Motor neuron (in vitro differentiated cells): ENCODE measurements at regions of chr2 and their contacts with region 1.

Region 1: DNA sequence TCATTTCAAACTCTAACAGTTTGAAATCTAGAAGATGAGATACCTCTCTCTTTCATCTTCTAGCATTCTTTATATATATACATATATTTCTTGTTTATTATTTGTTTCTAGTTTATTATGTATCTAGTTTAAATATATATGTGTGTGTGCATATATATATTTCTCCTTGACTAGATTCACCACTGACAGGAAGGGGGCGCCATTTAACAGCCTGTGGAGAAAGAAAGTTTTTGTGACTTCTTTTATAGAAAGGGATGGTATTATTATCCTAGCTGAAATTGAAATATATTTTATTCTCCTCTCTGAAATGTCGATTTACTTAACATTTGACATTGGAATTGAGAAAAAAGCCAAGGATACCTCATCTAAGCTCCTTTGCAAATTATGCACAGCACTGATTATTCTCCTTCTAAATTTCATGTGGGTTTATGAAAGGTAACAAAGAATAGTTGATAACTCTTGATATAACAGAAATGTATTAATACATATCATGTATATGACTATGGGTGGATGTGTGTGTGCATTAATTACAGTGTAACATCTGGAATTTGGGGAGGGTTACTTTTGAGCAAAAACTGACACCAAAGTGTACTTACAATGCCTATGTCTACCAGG is 160.7 kb upstream of the NT5C1B start:
- ATAC-seq: peak in 3 of 8 experiments; percentile 26 to 54 (median 49)
- H3K4me3 ChIP-seq: no peak overlapping the region
- H3K27ac ChIP-seq: no peak overlapping the region
- H3K4me1 ChIP-seq: no peaks in the 10 kb centered on the region

Region 2: GRCh38 chr2:18546567-18546966 is 203.5 kb before region 1 on chr2:
- in situ Hi-C with region 1: loop called in 1 of 9 experiments (anchors 25 kb)
- ATAC-seq: peak in 1 of 8 experiments; percentile 76
- H3K4me3 ChIP-seq: no peak overlapping the region
- H3K27ac ChIP-seq: no peak overlapping the region
- H3K4me1 ChIP-seq: no peaks in the 10 kb centered on the region

Region 3: GRCh38 chr2:18626256-18626668 is 123.8 kb before region 1 on chr2:
- in situ Hi-C with region 1: no loop called
- ATAC-seq: no peak
- H3K4me3 ChIP-seq: no peak overlapping the region
- H3K27ac ChIP-seq: no peak overlapping the region
- H3K4me1 ChIP-seq: no peaks in the 10 kb centered on the region

Region 4: GRCh38 chr2:19046986-19047780 is 297.2 kb after region 1 on chr2:
- in situ Hi-C with region 1: loop called in 1 of 9 experiments (anchors 25 kb)
- ATAC-seq: no peak
- H3K4me3 ChIP-seq: no peak overlapping the region
- H3K27ac ChIP-seq: no peak overlapping the region
- H3K4me1 ChIP-seq: no peaks in the 10 kb centered on the region

Region 5: DNA sequence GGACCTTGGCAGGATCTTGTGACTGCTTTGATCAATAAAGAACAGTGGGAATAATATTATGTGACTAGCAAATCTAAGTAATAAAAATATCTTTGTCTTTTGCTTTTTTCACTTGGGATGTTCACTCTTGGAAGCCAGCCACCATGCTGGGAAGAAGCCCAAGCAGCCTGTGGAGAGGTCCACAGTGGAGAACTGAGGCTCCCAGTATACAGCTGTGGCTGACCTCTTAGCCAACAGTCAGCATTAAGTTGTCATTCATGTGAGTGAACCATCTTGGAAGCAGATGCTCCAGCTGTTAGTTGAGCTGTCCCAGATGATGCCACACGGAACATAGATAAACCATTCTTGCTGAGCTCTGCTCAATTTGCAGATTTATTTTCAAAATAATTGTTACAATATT is 448.4 kb after region 1 on chr2:
- in situ Hi-C with region 1: no loop called
- ATAC-seq: no peak
- H3K4me3 ChIP-seq: no peak overlapping the region
- H3K27ac ChIP-seq: no peak overlapping the region
- H3K4me1 ChIP-seq: no peaks in the 10 kb centered on the region

Region 6: DNA sequence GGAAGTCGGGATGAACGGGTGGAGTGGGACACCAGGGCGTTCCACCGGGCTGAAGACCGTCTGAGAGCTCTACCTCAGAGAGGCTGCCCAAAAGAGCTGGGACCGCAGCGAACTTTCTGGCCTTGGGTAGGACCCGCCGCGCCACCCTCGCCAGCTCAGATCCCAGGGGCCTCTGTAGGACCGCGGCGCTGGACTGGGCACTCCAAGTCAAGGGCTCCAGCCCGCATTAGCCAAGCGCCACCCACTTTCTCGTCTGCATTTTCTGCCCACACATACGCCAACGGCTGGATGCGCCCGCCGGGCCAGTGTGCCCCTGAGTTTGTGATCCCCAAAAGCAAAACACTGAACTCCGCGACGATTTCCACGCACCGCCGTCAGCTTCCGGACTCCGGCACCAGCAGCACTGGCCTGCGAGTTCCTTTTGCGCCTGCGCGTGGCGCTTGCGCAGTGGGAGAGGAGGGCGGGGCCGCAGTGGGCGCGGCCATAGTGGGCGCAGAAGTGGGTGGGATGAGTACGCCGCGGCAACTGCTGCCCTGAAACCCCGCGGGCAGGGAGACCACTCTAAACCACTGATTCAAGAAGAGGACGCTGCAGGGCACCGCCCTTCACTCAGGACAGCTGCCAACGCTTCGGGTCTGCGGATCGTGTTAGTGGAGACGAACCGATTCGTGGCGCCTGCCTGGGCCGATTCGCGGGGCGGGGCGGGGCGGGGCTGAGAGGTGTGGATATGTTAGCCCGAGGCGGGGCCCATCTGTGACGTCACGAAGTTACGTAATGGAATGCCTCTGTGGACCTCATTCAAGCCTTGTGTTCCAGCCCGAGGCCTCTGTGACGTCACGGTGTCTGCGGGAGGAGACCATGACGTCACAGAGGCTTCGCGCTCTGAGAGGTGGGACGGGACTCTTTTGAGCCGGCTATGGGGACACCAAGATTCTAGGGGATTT is 597.9 kb after region 1 on chr2:
- in situ Hi-C with region 1: loop called in 5 of 9 experiments (anchors 25 kb)
- ATAC-seq: peak; percentile 87 to 94 (median 92)
- H3K4me3 ChIP-seq: peak overlapping the region; percentile 59 to 83 (median 76)
- H3K27ac ChIP-seq: peak overlapping the region; percentile 82 to 83
- H3K4me1 ChIP-seq: peaks cover 4 to 20% of the 10 kb centered on the region in 2 donors